Thyroid gland (tissue), 4 donors: ENCODE measurements at regions of chr2 and their contacts with region 1.

Region 1: GRCh38 chr2:62410015-62410453 is 96.0 kb downstream of the TMEM17 start:
- DNase-seq: no peak
- H3K4me3 ChIP-seq: no peak overlapping the region
- H3K27ac ChIP-seq: no peak overlapping the region
- H3K4me1 ChIP-seq: peaks cover 9 to 16% of the 10 kb centered on the region in 2 donors
- H3K27me3 ChIP-seq: no peaks in the 10 kb centered on the region
- CTCF ChIP-seq: no peak
- POLR2A ChIP-seq: no peak

Region 2: DNA sequence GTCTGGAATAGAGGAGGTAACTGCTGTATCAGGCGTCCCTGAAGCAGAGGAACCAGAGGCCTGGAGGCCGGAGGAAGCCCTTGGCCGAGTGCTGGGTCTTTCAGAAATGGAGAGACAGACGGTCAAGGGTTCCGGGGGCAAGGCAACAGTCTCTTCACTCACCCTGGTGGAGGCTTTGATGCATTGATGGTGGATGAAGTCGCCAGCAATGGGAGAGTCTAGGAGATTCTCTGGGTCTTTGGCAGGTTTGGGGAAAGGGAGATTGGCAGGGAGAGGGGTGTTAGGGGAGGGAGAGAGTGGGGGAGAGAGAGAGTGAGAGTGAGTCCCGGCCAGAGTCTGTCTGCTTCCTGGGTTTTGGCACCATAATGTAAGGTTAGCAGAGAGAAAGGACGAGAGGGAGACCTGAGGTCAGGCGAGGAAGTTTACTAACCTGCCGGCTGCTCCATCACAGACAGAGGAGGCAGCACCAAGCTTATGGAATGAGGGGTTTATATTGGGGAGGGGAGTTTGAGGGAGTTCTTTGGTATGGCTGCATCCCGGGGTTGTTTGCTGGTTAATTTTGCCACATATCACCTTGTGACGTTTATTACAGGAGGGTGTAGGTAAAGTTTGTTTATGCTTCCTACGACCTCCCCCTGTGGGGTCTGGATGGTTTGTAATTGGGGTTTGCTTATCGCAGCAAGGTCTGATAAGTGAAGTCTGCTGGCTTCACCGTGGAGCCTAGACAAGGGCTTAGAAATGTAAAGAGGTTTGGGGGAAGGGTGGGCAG is 485.0 kb before region 1 on chr2:
- intact Hi-C with region 1: loop called (anchors 5 kb)
- DNase-seq: no peak
- H3K4me3 ChIP-seq: no peak overlapping the region
- H3K27ac ChIP-seq: no peak overlapping the region
- H3K4me1 ChIP-seq: peaks cover 14 to 18% of the 10 kb centered on the region in 2 donors
- H3K27me3 ChIP-seq: no peaks in the 10 kb centered on the region
- CTCF ChIP-seq: no peak
- POLR2A ChIP-seq: no peak

Region 3: DNA sequence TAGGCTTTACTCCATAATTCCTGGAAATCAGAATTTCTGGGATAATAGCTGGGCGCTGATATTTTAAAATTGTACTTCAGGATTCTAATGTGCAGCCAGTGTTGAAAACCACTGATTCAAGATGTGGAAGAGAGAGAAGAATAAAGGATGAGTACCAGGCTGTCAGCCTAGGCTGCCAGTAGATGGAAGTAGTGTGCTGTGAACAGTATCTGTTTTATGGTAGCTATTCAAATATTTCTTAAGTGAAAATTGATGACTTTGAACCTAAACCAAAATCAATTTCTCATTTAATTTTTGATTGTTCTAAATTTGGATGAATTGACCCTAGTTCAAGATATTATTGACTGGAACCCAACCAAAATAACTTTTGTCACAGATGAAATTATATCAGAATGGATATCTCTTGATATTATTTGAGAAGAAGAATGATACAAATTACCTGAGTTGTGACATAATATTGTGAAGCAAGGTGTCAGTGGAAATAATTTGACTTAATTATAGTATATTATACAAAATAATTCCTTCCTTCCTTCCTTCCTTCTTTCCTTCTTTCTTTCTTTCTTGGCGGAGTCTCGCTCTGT is 416.5 kb before region 1 on chr2:
- intact Hi-C with region 1: loop called (anchors 5 kb)
- DNase-seq: peak; percentile 47 to 50
- H3K4me3 ChIP-seq: no peak overlapping the region
- H3K27ac ChIP-seq: no peak overlapping the region
- H3K4me1 ChIP-seq: peaks cover 10 to 29% of the 10 kb centered on the region in 2 donors
- H3K27me3 ChIP-seq: no peaks in the 10 kb centered on the region
- CTCF ChIP-seq: peak; percentile 13 to 83 (median 76)
- POLR2A ChIP-seq: no peak

Region 4: GRCh38 chr2:62195421-62196277 is 214.4 kb before region 1 on chr2 and contains the start of gene B3GNT2:
- intact Hi-C with region 1: loop called (anchors 5 kb)
- DNase-seq: peak; percentile 83 to 84
- H3K4me3 ChIP-seq: peak within 1 kb of the TSS; percentile 87 to 94 (median 92)
- H3K27ac ChIP-seq: peak within 1 kb of the TSS; percentile 94 to 96 (median 96)
- H3K4me1 ChIP-seq: peaks cover 21 to 33% of the 10 kb centered on the region in 2 donors
- H3K27me3 ChIP-seq: no peaks in the 10 kb centered on the region
- CTCF ChIP-seq: no peak
- POLR2A ChIP-seq: peak; percentile 12 to 93
- total RNA-seq, gene B3GNT2: 18.9 to 37.1 (median 27.3) TPM

Region 5: DNA sequence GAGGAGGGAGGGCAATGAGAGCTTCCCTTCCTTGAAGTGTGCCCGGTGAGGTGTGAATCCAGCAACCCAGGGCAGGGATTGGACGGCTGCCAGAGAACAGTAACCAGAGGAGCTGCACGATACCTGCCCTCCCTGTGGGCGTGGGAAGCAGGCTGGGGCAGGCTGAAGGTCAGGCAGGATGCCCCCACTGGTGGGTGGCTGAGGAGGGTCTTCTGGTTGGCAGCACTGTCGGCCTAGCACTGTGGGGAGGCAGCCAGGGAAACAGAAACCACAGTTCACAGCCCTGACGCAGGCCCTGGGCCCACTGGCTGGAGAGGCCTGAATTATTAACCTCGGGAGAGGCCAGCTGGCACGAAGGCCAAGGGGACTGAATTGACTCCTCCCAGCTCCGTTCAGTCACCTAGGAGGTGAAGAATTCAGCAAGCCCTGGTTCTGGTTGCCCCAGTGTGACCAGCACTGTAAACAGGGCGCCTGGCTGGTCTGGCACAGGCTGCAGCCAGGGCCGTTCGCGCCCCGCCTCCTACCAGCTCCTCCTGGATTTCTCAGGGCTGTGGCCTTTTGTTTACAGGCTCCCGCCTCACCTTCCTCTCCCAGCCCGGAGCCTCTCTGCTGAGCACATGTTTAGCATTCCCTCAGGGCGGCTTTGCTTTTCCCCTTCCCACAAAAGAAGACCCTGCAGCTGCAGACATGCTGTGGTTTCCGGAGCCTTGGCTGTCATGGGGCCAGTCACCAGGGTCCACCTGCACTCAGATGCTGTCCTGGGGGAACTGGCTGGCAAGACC is 116.4 kb before region 1 on chr2:
- intact Hi-C with region 1: loop called (anchors 10 kb)
- DNase-seq: peak; percentile 99
- H3K4me3 ChIP-seq: no peak overlapping the region
- H3K27ac ChIP-seq: peak overlapping the region; percentile 90 to 98 (median 93)
- H3K4me1 ChIP-seq: peaks cover 23 to 35% of the 10 kb centered on the region in 2 donors
- H3K27me3 ChIP-seq: no peaks in the 10 kb centered on the region
- CTCF ChIP-seq: no peak
- POLR2A ChIP-seq: peak in 1 of 2 donors; percentile 37

Region 6: GRCh38 chr2:62334440-62335058 is 75.5 kb before region 1 on chr2:
- intact Hi-C with region 1: no loop called
- DNase-seq: no peak
- H3K4me3 ChIP-seq: no peak overlapping the region
- H3K27ac ChIP-seq: peak overlapping the region; percentile 19 to 27 (median 21)
- H3K4me1 ChIP-seq: peaks cover 7 to 10% of the 10 kb centered on the region in 2 donors
- H3K27me3 ChIP-seq: no peaks in the 10 kb centered on the region
- CTCF ChIP-seq: no peak
- POLR2A ChIP-seq: no peak